Brain microvascular endothelial cell (primary cell): ENCODE measurements at regions of chr21 and their contacts with region 1.

Region 1: DNA sequence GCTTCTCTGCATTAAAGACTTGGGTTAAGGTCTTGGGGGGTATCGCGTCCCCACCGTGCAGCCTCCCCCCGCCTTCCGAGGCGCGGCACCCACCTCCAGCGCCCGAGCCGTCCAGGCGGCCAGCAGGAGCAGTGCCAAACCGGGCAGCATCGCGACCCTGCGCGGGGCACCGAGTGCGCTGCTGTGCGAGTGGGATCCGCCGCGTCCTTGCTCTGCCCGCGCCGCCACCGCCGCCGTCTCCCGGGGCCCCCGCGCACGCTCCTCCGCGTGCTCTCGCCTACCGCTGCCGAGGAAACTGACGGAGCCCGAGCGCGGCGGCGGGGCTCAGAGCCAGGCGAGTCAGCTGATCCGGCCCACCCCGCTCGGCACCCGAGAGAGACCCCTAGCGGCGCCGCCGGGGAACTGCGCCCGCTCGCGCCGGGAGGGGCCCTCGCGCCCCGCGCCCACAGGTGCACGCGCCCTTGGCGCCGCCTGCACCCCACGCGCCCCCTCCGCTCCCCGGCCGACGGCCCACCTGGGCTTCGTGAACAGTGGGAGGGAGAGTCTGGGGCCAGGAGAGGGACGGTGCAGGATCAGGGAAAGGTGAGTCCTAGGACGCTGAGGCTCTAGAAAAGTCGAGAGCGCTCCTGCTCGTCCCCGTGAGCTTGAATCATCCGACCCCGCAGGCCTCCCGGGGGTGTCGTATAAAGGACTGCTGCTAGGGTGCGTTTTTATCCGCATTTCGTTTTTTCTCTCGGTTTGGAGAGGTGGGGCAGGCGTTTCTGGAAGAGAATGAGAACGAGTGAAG is at the start of gene APP:
- DNase-seq: peak; percentile 60
- H3K4me3 ChIP-seq: peak within 1 kb of the TSS; percentile 89
- H3K27ac ChIP-seq: peak within 1 kb of the TSS; percentile 74
- H3K27me3 ChIP-seq: no peaks in the 10 kb centered on the region
- CTCF ChIP-seq: peak; percentile 64

Region 2: GRCh38 chr21:25881525-25882376 is 288.9 kb before region 1 on chr21:
- in situ Hi-C with region 1: loop called (anchors 25 kb)
- DNase-seq: peak; percentile 60
- H3K4me3 ChIP-seq: no peak overlapping the region
- H3K27ac ChIP-seq: no peak overlapping the region
- H3K27me3 ChIP-seq: no peaks in the 10 kb centered on the region
- CTCF ChIP-seq: peak; percentile 98

Region 3: GRCh38 chr21:25970254-25970930 is 200.3 kb before region 1 on chr21:
- in situ Hi-C with region 1: no loop called
- DNase-seq: peak; percentile 29
- H3K4me3 ChIP-seq: no peak overlapping the region
- H3K27ac ChIP-seq: no peak overlapping the region
- H3K27me3 ChIP-seq: no peaks in the 10 kb centered on the region
- CTCF ChIP-seq: no peak